K562 (cell line): ENCODE measurements at regions of chr10 and their contacts with region 1.

Region 1: GRCh38 chr10:15439341-15439842 is 68.3 kb upstream of the FAM171A1 start:
- DNase-seq: peak; percentile 32 to 75 (median 47)
- ATAC-seq: peak; percentile 73
- H3K4me3 ChIP-seq: peak overlapping the region; percentile 27; the same call in 1 of the 2 replicates
- H3K27ac ChIP-seq: peak overlapping the region; percentile 70
- H3K4me1 ChIP-seq: peaks cover 23 to 37% of the 10 kb centered on the region in 2 experiments
- H3K27me3 ChIP-seq: no peaks in the 10 kb centered on the region
- CTCF ChIP-seq: peak; percentile 43 to 72 (median 53); a peak in 4 of 6 replicates
- EP300 ChIP-seq: peak; percentile 26; the same call in 1 of the 2 replicates
- POLR2A ChIP-seq: no peak
- RAD21 ChIP-seq: 0 out of 4 replicates have a peak, but pooled peaks of 1 of the 2 experiments have one; percentile 22

Region 2: GRCh38 chr10:15451137-15452094 is 12.0 kb after region 1 on chr10:
- CTCF ChIA-PET with region 1: no interaction called
- POLR2A ChIA-PET with region 1: interaction called, 14 read pairs
- in situ Hi-C with region 1: no loop called
- intact Hi-C with region 1: no loop called
- DNase-seq: peak; percentile 82 to 95 (median 88)
- ATAC-seq: peak; percentile 91
- H3K4me3 ChIP-seq: no peak overlapping the region
- H3K27ac ChIP-seq: peak overlapping the region; percentile 87
- H3K4me1 ChIP-seq: peaks cover 18 to 62% of the 10 kb centered on the region in 2 experiments
- H3K27me3 ChIP-seq: no peaks in the 10 kb centered on the region
- CTCF ChIP-seq: no peak; a peak in 1 of 6 replicates
- EP300 ChIP-seq: peak; percentile 97
- POLR2A ChIP-seq: no peak
- RAD21 ChIP-seq: peak in 1 of 2 experiments; percentile 37; a peak in 2 of 4 replicates

Region 3: GRCh38 chr10:15725603-15726002 is 286.2 kb after region 1 on chr10:
- CTCF ChIA-PET with region 1: interaction called, 19 read pairs
- POLR2A ChIA-PET with region 1: interaction called, 4 read pairs
- in situ Hi-C with region 1: loop called (anchors 5 kb)
- intact Hi-C with region 1: loop called (anchors 2 kb)
- DNase-seq: peak; percentile 50 to 85 (median 68)
- ATAC-seq: peak; percentile 98
- H3K4me3 ChIP-seq: no peak overlapping the region
- H3K27ac ChIP-seq: no peak overlapping the region
- H3K4me1 ChIP-seq: peaks cover 0 to 5% of the 10 kb centered on the region in 2 experiments; a peak in 3 of 5 replicates
- H3K27me3 ChIP-seq: peaks cover 0 to 4% of the 10 kb centered on the region in 2 experiments; a peak in 1 of 5 replicates
- CTCF ChIP-seq: peak; percentile 68 to 92 (median 69)
- EP300 ChIP-seq: peak; percentile 27; the same call in 1 of the 2 replicates
- POLR2A ChIP-seq: no peak
- RAD21 ChIP-seq: peak; percentile 96 to 97